Activated CD4-positive, alpha-beta memory T cell treated with anti-CD3 and anti-CD28 coated beads for 36 hours (primary cell): ENCODE measurements at regions of chr13 and their contacts with region 1.

Region 1: DNA sequence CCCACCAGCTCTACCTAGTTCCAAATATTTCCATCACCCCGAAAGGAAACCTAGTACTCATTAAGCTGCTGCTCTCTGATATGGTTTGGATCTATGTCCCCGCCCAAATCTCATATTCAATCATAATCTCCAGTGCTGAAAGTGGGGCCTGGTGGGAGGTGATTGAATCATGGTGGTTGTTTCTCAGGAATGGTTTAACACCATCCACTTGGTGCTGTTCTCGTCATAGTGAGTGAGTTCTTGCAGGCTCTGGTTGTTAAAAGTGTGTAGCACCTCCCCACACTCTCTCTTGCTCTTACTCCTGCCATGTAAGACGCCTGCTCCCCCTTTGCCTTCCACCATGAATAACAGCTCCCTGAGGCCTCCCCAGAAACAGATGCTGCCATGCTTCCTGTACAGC is 43.4 kb upstream of the MED4 start:
- DNase-seq: peak; percentile 68
- H3K4me3 Mint-ChIP-seq: no peak overlapping the region
- H3K27ac Mint-ChIP-seq: no peak overlapping the region
- H3K4me1 Mint-ChIP-seq: peaks cover 10% of the 10 kb centered on the region
- H3K27me3 Mint-ChIP-seq: no peaks in the 10 kb centered on the region

Region 2: DNA sequence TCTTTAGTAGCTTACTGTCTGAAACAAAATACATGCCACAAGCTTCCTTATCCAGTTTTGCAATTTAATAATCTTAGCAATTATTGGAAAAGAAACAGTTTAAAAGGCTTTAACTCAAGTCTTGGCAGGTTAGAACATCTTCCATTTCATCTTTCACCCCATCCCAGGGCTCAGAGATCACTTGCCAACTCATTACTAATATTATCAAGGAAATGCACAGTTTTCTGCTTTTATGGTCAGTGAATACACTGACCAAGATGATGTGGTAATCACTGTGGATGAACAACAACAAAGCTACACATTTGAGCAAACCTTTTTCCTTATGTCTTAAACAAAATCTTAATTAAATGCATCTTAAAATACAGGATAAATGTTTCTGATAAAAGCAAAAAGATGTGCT is 46.7 kb after region 1 on chr13:
- CTCF ChIA-PET with region 1: no interaction called
- POLR2A ChIA-PET with region 1: no interaction called
- intact Hi-C with region 1: loop called (anchors 5 kb)
- DNase-seq: no peak
- H3K4me3 Mint-ChIP-seq: no peak overlapping the region
- H3K27ac Mint-ChIP-seq: no peak overlapping the region
- H3K4me1 Mint-ChIP-seq: peaks cover 51% of the 10 kb centered on the region
- H3K27me3 Mint-ChIP-seq: no peaks in the 10 kb centered on the region

Region 3: GRCh38 chr13:48222358-48223301 is 84.4 kb after region 1 on chr13:
- CTCF ChIA-PET with region 1: no interaction called
- POLR2A ChIA-PET with region 1: no interaction called
- intact Hi-C with region 1: loop called (anchors 1 kb)
- DNase-seq: peak; percentile 30
- H3K4me3 Mint-ChIP-seq: peak overlapping the region; percentile 35
- H3K27ac Mint-ChIP-seq: no peak overlapping the region
- H3K4me1 Mint-ChIP-seq: peaks cover 51% of the 10 kb centered on the region
- H3K27me3 Mint-ChIP-seq: no peaks in the 10 kb centered on the region